Activated CD4-positive, alpha-beta memory T cell treated with anti-CD3 and anti-CD28 coated beads, Interleukin-2, amount 10 ng/mL, durations not matched to agents 7 days and 5 days (primary cell): ENCODE measurements at regions of chr1 and their contacts with region 1.

Region 1: DNA sequence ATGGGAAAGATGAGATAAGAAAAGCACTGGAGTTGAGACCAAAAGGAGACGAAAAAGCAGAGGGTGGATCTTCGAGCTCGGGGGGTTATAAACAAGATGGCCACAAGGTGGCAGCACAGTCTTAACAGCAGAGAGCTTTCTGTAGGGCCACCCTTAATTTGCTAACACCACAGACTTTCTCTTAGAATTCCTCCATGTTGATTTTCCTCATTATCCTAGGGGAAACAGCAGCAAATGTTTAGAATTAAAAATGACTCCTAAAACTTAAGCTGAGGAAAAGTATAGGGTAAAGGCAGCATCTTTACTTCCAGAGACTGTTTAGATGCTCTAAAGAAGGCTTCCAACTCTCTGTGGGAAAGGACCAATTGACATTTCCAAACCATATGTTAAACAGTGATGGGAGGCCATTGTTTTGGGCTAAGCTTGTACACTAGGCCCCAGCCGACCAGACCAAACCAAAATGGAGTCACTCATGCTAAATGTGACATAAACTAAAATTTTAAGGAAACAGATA is 2.5 kb upstream of the APOBEC4 start:
- DNase-seq: peak; percentile 70
- H3K4me3 Mint-ChIP-seq: no peak overlapping the region
- H3K27ac Mint-ChIP-seq: no peak overlapping the region
- H3K4me1 Mint-ChIP-seq: peaks cover 35% of the 10 kb centered on the region
- H3K27me3 Mint-ChIP-seq: peaks cover 5% of the 10 kb centered on the region

Region 2: GRCh38 chr1:183498342-183498991 is 157.2 kb before region 1 on chr1:
- CTCF ChIA-PET with region 1: no interaction called
- POLR2A ChIA-PET with region 1: no interaction called
- DNase-seq: no peak
- H3K4me3 Mint-ChIP-seq: peak overlapping the region; percentile 6
- H3K27ac Mint-ChIP-seq: peak overlapping the region; percentile 67
- H3K4me1 Mint-ChIP-seq: peaks cover 44% of the 10 kb centered on the region
- H3K27me3 Mint-ChIP-seq: no peaks in the 10 kb centered on the region

Region 3: GRCh38 chr1:183635606-183636333 is 19.8 kb before region 1 on chr1 and contains the start of gene ARPC5:
- CTCF ChIA-PET with region 1: interaction called, 14 read pairs
- POLR2A ChIA-PET with region 1: interaction called, 9 read pairs
- DNase-seq: peak; percentile 97
- H3K4me3 Mint-ChIP-seq: peak within 1 kb of the TSS; percentile 100
- H3K27ac Mint-ChIP-seq: peak within 1 kb of the TSS; percentile 100
- H3K4me1 Mint-ChIP-seq: peaks cover 34% of the 10 kb centered on the region
- H3K27me3 Mint-ChIP-seq: peaks cover 20% of the 10 kb centered on the region
- total RNA-seq, gene ARPC5: 233 to 235 TPM

Region 4: DNA sequence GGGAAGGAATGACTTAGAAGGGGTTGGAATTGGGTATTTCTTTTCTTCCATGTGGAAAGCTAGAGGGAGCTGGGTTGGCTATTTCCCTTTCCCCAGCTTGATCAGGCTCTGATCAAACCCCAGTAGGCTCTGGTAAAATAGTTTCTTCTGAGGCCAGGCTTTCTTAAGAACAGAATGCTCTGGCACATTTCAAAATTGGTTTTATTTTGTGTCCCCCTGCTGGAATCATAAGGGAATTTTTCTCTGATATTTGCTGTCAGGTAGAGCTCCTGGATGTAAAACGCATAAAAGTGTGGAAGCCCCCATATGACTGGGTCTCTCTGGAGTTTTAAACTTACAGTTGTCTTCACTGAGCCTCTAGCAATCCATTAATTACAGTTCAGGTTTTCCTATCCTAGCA is 14.6 kb after region 1 on chr1:
- CTCF ChIA-PET with region 1: interaction called, 22 read pairs
- POLR2A ChIA-PET with region 1: no interaction called
- DNase-seq: no peak
- H3K4me3 Mint-ChIP-seq: no peak overlapping the region
- H3K27ac Mint-ChIP-seq: no peak overlapping the region
- H3K4me1 Mint-ChIP-seq: no peaks in the 10 kb centered on the region
- H3K27me3 Mint-ChIP-seq: peaks cover 7% of the 10 kb centered on the region

Region 5: GRCh38 chr1:183685112-183685713 is 29.6 kb after region 1 on chr1:
- CTCF ChIA-PET with region 1: interaction called, 71 read pairs
- POLR2A ChIA-PET with region 1: no interaction called
- DNase-seq: no peak
- H3K4me3 Mint-ChIP-seq: no peak overlapping the region
- H3K27ac Mint-ChIP-seq: no peak overlapping the region
- H3K4me1 Mint-ChIP-seq: no peaks in the 10 kb centered on the region
- H3K27me3 Mint-ChIP-seq: peaks cover 22% of the 10 kb centered on the region